ENCODE measurements at regions of chr1 and their contacts with region 1.

Region 1: GRCh38 chr1:112390775-112391602 is 5.0 kb upstream of the CTTNBP2NL start:
- DNase-seq: peak; percentile 96
- H3K4me3 ChIP-seq: peak overlapping the region; percentile 45
- H3K27ac ChIP-seq: peak overlapping the region; percentile 19
- H3K4me1 ChIP-seq: peaks cover 27% of the 10 kb centered on the region
- H3K27me3 ChIP-seq: no peaks in the 10 kb centered on the region
- CTCF ChIP-seq: peak; percentile 96

Region 2: DNA sequence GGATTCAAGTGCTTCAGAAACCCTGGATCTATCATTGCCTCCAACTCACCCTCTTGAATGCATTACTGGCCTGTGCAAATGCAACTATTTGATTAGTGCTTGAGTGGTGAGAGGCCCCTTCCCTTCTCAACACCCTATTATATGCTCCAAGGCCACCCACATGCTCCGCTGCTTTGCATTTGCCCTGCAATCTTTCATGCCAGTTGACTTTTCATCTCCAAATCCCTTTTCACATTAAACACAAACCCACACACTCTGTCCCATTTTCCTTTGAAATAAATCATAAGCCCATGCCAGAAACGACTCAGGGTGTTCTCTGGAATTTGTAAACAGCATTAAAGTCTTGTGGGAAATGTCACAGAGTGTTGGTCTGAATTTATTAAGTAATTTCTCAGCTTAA is 73.8 kb before region 1 on chr1:
- CTCF ChIA-PET with region 1: no interaction called
- POLR2A ChIA-PET with region 1: no interaction called
- intact Hi-C with region 1: no loop called
- DNase-seq: no peak
- H3K4me3 ChIP-seq: no peak overlapping the region
- H3K27ac ChIP-seq: no peak overlapping the region
- H3K4me1 ChIP-seq: no peaks in the 10 kb centered on the region
- H3K27me3 ChIP-seq: peaks cover 76% of the 10 kb centered on the region
- CTCF ChIP-seq: no peak

Region 3: GRCh38 chr1:112466078-112466660 is 75.2 kb after region 1 on chr1:
- CTCF ChIA-PET with region 1: interaction called, 15 read pairs
- POLR2A ChIA-PET with region 1: no interaction called
- intact Hi-C with region 1: loop called (anchors 1 kb)
- DNase-seq: peak; percentile 92
- H3K4me3 ChIP-seq: peak overlapping the region; percentile 37
- H3K27ac ChIP-seq: no peak overlapping the region
- H3K4me1 ChIP-seq: peaks cover 6% of the 10 kb centered on the region
- H3K27me3 ChIP-seq: no peaks in the 10 kb centered on the region
- CTCF ChIP-seq: peak; percentile 93

Region 4: GRCh38 chr1:112619520-112620376 is 228.8 kb after region 1 on chr1 and contains the start of gene CAPZA1:
- CTCF ChIA-PET with region 1: interaction called, 10 read pairs
- POLR2A ChIA-PET with region 1: no interaction called
- intact Hi-C with region 1: loop called (anchors 2 kb)
- DNase-seq: peak; percentile 95
- H3K4me3 ChIP-seq: peak within 1 kb of the TSS; percentile 83
- H3K27ac ChIP-seq: peak within 1 kb of the TSS; percentile 99
- H3K4me1 ChIP-seq: peaks cover 18% of the 10 kb centered on the region
- H3K27me3 ChIP-seq: no peaks in the 10 kb centered on the region
- CTCF ChIP-seq: no peak; the same call in 1 of the 2 replicates
- total RNA-seq, gene CAPZA1: 158 and 171 TPM in 2 replicates

Region 5: GRCh38 chr1:112706908-112707663 is 316.1 kb after region 1 on chr1 and contains the start of gene RHOC:
- CTCF ChIA-PET with region 1: interaction called, 6 read pairs
- POLR2A ChIA-PET with region 1: interaction called, 8 read pairs
- intact Hi-C with region 1: loop called (anchors 1 kb)
- DNase-seq: peak; percentile 87
- H3K4me3 ChIP-seq: peak within 1 kb of the TSS; percentile 64
- H3K27ac ChIP-seq: peak within 1 kb of the TSS; percentile 75
- H3K4me1 ChIP-seq: peaks cover 22% of the 10 kb centered on the region
- H3K27me3 ChIP-seq: no peaks in the 10 kb centered on the region
- CTCF ChIP-seq: peak; percentile 86
- total RNA-seq, gene RHOC: 54.3 and 62.5 TPM in 2 replicates

Region 6: DNA sequence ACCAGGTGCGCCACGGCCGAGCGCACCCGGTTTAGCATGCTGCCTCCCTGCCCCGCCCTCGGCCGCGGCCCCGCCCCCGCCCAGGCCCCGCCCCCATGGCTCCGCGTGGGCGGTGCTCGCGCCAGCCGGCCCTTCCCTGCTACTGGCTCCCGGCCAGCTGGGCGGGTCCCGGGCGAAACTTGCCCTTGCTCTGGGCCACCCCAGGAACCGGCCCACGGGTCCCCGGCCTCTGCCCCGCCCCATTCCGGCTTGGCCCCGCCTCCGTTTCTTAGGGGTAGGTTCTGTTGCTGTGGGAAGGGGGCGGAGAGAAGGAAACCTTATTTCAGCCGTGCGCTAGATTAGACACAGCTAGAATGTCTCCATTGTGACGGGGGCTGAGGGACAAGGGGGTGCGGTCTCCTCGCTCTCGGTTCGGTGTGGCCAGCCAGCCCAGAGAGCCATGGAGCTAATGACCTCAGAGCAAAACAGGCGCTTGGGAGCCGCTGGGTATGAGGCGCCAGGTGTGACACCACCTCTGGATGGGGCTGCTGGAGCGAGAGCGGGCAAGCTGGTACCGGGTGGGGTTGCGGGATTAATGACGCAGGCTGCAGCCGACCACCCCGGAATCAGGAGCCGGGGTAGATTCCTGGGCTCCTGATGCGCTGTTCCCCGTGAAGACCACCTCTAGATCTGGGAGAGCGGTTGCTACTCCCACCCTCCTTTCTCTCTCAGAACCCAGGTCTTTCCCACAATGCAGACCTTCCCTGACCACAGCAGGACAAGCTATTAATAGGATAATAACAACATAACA is 324.5 kb after region 1 on chr1 and contains the start of gene PPM1J:
- CTCF ChIA-PET with region 1: interaction called, 4 read pairs
- POLR2A ChIA-PET with region 1: interaction called, 4 read pairs
- intact Hi-C with region 1: loop called (anchors 2 kb)
- DNase-seq: peak; percentile 91
- H3K4me3 ChIP-seq: peak within 1 kb of the TSS; percentile 52
- H3K27ac ChIP-seq: no peak within 1 kb of the TSS
- H3K4me1 ChIP-seq: peaks cover 19% of the 10 kb centered on the region
- H3K27me3 ChIP-seq: peaks cover 48% of the 10 kb centered on the region
- CTCF ChIP-seq: no peak
- total RNA-seq, gene PPM1J: 0.28 and 0.52 TPM in 2 replicates

Region 7: DNA sequence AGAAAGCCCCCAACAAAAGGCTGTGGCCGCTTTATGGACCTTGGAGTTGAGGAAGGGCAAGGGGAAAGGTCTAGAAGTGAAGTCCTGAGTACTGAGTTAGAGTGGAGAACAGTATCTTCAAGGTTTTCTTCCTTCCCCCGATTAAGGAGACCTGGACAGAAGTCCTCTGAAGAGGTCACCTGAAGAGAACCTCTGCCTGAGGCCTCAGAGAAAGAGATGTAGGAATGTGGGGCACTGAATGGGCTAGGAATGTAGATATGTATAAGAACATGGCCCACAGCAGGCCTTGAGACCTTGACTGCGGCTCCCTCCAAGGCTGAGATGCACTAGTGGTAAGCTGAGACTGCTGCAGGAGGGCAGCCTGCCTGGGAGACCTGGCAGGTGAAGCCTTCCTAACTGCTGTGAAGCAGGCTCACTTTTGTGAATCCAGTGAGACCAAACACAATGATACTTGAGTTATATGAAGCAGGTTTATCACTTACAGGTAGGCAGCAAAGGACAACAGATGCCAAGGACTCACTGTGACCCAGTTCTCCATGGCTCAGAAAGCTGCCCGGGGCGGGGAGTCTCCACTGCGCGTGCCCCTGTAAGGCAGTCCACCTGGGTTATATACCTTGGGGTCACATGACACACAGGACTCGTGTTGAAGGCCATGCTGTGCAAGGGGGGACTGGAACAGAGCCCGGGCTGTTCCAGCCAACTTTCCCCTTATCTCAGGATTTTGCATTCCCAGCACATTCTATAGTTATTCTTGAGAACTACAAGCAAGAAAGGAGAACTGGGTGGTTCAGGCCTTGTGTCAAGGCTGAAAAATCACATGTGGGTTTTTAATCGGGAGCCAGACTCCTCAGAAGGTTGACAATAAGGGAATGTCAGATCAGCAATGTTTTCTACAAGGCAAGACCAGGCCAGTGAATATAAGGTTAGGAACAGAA is 402.9 kb after region 1 on chr1:
- CTCF ChIA-PET with region 1: no interaction called
- POLR2A ChIA-PET with region 1: no interaction called
- intact Hi-C with region 1: no loop called
- DNase-seq: no peak
- H3K4me3 ChIP-seq: no peak overlapping the region
- H3K27ac ChIP-seq: no peak overlapping the region
- H3K4me1 ChIP-seq: peaks cover 15% of the 10 kb centered on the region
- H3K27me3 ChIP-seq: peaks cover 86% of the 10 kb centered on the region
- CTCF ChIP-seq: no peak

Region 8: GRCh38 chr1:112803906-112804762 is 413.1 kb after region 1 on chr1:
- CTCF ChIA-PET with region 1: interaction called, 3 read pairs
- POLR2A ChIA-PET with region 1: no interaction called
- intact Hi-C with region 1: loop called (anchors 5 kb)
- DNase-seq: peak; percentile 65
- H3K4me3 ChIP-seq: no peak overlapping the region
- H3K27ac ChIP-seq: no peak overlapping the region
- H3K4me1 ChIP-seq: no peaks in the 10 kb centered on the region
- H3K27me3 ChIP-seq: peaks cover 77% of the 10 kb centered on the region
- CTCF ChIP-seq: peak; percentile 83